ENCODE measurements at regions of chr2 and their contacts with region 1.

Region 1: DNA sequence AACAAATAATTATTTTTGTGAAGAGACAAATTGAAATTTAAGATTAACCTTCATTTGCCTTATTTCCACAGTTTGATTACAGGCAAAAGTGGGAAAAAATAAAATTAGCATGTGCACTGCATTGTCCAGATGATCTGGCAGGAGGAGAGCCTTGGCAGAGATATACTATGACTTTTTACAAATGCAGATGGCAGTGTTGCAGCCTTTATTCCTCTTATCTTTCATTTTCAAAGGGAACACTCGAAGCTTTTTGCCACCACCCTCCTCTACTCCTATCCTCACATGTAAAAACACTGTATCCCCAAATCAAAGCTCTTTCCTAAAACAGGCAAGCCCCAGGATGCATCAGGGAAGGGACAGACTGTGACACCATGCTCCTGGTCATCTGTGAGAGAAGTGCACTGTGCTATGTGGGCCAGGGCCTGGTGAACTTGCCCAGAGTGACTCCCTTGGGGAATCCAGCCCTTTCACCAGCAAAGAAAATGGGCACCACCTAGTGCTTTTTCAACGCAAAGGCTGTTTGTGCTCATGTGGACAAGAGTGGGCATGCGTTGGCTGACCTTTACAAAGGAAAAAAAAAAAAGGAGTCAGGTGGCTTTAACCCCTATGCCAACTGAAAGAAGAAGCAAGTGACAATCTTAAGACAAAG is 74.7 kb upstream of the ETAA1 start:
- DNase-seq: peak; percentile 33 to 41
- H3K4me3 ChIP-seq: no peak overlapping the region
- H3K27ac ChIP-seq: no peak overlapping the region
- H3K4me1 ChIP-seq: no peaks in the 10 kb centered on the region
- H3K27me3 ChIP-seq: no peaks in the 10 kb centered on the region
- CTCF ChIP-seq: peak; percentile 62

Region 2: DNA sequence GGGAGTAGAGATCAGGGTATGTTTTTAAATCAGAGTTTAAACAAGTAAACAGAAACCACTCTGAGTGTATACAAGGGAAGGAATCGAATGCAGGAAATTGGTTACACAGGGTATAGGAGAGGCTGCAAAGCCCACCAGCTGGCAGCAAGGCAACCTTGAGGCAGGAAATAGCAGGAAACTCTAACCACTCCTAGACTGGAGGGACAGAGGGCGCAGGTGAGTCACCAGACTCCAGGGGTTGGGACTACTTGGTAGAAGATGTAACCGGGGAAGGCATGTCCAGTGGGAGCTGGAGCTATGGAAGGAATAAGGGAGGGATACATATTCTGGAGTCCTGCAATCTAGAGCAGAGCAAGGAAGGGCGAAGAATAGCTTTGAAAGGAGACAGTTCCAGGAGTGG is 735.3 kb before region 1 on chr2:
- CTCF ChIA-PET with region 1: no interaction called
- POLR2A ChIA-PET with region 1: no interaction called
- intact Hi-C with region 1: loop called (anchors 10 kb)
- DNase-seq: peak in 1 of 2 experiments; percentile 30
- H3K4me3 ChIP-seq: no peak overlapping the region
- H3K27ac ChIP-seq: no peak overlapping the region
- H3K4me1 ChIP-seq: no peaks in the 10 kb centered on the region
- H3K27me3 ChIP-seq: no peaks in the 10 kb centered on the region
- CTCF ChIP-seq: no peak; the same call in 1 of the 2 replicates

Region 3: DNA sequence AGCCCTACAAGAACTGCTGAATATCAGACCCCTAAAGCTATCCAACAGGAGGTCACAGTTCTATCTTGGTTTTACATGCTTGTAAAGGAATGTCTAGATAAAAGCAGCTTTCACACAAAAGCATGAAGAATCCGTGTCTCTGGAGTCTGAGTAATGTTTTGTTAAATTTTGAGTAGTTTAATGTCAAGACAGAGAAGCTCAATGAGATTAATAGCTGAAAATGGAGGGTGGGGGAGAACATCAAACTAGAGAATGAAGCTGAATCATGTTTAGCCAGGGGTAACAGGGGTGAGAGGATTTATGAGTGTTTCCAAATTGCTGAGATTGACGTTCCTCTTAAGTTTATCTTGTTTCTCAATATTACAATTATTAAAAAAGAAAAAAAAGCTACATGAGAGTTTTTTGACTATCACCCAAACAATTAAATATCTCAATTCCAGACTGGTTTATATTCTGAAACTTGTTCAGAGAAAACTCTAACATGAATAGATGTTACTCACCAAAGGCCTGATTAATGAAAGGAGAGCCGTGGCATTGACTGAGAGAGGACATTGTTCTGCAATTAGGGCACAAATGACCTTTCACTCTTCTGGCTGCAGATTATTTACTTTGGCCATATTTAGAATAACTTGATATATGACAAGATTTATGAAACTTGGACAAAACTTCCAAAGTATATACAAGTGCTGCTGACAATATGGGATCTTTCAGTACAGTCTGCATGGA is 191.8 kb before region 1 on chr2:
- CTCF ChIA-PET with region 1: no interaction called
- POLR2A ChIA-PET with region 1: no interaction called
- intact Hi-C with region 1: loop called (anchors 10 kb)
- DNase-seq: no peak
- H3K4me3 ChIP-seq: no peak overlapping the region
- H3K27ac ChIP-seq: no peak overlapping the region
- H3K4me1 ChIP-seq: peaks cover 6% of the 10 kb centered on the region; the same call in 1 of the 2 replicates
- H3K27me3 ChIP-seq: no peaks in the 10 kb centered on the region
- CTCF ChIP-seq: no peak